ENCODE measurements at regions of chr2 and their contacts with region 1.

Region 1: GRCh38 chr2:189096769-189097447 is 82.7 kb downstream of the COL5A2 start:
- H3K4me3 Mint-ChIP-seq: no peak overlapping the region
- H3K27ac Mint-ChIP-seq: no peak overlapping the region
- H3K4me1 Mint-ChIP-seq: no peaks in the 10 kb centered on the region
- H3K27me3 Mint-ChIP-seq: no peaks in the 10 kb centered on the region

Region 2: GRCh38 chr2:188524519-188525113 is 572.3 kb before region 1 on chr2:
- intact Hi-C with region 1: loop called (anchors 10 kb)
- H3K4me3 Mint-ChIP-seq: no peak overlapping the region
- H3K27ac Mint-ChIP-seq: no peak overlapping the region
- H3K4me1 Mint-ChIP-seq: no peaks in the 10 kb centered on the region
- H3K27me3 Mint-ChIP-seq: no peaks in the 10 kb centered on the region

Region 3: DNA sequence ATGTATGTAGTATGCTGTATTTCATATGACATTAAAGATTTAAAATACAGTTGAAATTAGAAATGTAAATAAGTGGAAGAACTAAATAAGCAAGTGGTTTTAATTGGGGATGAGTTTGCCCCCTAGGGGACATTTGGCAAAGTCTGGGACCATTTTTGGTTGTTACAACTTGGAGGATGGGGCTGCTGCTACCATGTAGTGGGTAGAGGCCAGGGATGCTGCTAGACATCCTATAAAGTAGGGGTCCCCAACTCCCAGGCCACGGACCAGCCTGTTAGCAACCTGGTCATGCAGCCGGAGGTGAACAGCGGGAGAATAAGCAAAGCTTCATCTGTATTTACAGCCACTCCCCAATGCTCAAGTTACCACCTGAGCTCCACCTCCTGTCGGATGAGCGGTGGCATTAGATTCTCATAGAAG is 536.5 kb after region 1 on chr2:
- intact Hi-C with region 1: loop called (anchors 10 kb)
- H3K4me3 Mint-ChIP-seq: no peak overlapping the region
- H3K27ac Mint-ChIP-seq: no peak overlapping the region
- H3K4me1 Mint-ChIP-seq: no peaks in the 10 kb centered on the region
- H3K27me3 Mint-ChIP-seq: no peaks in the 10 kb centered on the region